ENCODE measurements at regions of chr12 and their contacts with region 1.

Region 1: DNA sequence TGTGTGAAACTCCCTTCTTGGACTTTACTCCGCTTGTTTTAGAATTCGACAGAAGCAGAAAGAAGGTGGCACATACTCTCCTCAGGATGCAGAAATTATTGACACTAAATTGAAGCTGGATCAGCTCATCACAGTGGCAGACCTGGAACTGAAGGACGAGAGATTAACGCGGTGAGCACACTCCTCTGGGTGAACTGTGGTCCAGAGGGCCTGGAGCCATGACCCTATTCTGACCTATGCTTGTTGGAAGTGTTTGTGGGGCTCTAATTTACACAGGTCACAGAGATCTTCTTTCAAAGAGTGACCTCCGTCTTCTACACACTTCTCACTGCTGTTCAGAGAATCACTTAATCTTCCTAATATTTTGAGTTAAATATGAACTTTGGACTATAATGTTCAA is 72.5 kb upstream of the MYF6 start:
- DNase-seq: no peak
- ATAC-seq: no peak

Region 2: DNA sequence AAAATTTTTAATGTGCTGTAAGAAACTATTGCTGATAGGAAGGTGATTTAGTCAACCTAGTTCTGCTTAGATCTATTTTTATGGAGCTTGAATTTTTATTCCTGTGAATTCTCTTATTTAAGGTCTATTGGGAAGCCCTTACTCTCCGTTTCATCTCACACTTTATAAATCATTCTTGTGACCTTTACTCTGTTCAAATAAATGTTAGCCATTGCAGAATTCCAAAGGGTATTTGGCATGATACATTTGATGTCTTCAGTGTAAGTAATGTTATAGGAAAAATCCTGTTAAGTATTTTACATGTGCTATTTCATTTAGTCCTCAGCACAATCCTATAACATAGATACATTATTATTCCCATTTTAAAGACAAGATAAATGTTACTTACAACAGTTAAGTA is 178.4 kb before region 1 on chr12:
- intact Hi-C with region 1: no loop called
- DNase-seq: no peak
- ATAC-seq: no peak

Region 3: DNA sequence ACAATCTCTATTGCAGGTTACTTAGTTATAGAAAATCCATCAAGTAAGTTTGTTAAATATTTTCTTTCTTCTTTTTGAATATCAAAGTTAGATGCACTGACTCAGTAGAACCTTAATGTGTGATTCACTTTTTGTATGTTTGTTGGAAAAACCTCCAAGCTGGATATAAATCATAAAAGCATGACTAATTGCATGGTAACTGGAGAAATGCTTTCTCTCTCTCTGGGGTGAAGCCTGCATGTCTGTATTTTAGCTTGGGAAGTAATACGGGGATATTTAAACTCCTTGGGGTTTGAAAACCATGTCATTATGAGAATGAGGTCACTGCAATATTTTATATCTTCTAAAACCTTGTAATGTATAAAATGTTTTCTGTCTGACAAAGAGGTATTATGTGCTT is 14.0 kb after region 1 on chr12:
- intact Hi-C with region 1: loop called (anchors 1 kb)
- DNase-seq: no peak
- ATAC-seq: no peak

Region 4: GRCh38 chr12:80791863-80792262 is 157.0 kb after region 1 on chr12:
- intact Hi-C with region 1: no loop called
- DNase-seq: no peak
- ATAC-seq: no peak

Measured in Right ventricle myocardium inferior (tissue), 1 donor.